ENCODE measurements at regions of chr7 and their contacts with region 1.

Region 1: GRCh38 chr7:26078437-26079336 is 73.3 kb upstream of the NFE2L3 start:
- DNase-seq: peak; percentile 69
- ATAC-seq: peak; percentile 92
- H3K4me3 ChIP-seq: peak overlapping the region; percentile 42; the same call in 1 of the 2 replicates
- H3K27ac ChIP-seq: no peak overlapping the region
- H3K4me1 ChIP-seq: peaks cover 30% of the 10 kb centered on the region
- H3K27me3 ChIP-seq: no peaks in the 10 kb centered on the region
- CTCF ChIP-seq: peak; percentile 71

Region 2: DNA sequence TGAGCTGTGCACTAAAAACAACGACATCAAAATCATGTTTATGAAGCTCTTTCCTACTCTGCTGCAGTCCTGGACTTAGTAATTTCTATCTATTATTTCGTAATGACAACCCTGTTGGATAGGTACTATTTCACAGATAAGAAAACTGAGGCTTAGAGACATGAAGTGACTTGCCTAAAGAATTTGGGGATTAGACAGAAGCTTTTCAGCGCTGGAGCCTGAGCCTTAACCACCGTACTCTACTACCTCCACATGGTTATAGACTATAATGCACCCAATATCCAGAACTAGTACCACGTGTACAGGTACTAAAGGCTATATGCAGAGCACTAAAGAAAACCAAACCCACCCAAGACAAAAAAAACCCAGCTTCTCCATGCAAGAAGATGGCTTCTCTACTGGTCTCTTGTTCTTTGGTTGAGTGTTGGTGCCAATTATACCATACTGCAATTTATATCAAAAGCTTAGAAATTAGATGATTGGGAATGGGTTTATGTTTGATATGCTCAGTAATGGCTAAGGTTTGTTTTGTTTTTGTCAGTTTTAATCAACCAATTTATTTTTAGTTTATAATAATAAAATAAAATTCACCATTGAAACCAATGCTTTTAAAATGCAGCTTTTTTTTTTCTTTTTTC is 206.4 kb after region 1 on chr7:
- CTCF ChIA-PET with region 1: no interaction called
- POLR2A ChIA-PET with region 1: no interaction called
- intact Hi-C with region 1: loop called (anchors 5 kb)
- DNase-seq: peak; percentile 65
- ATAC-seq: peak; percentile 84
- H3K4me3 ChIP-seq: no peak overlapping the region
- H3K27ac ChIP-seq: no peak overlapping the region
- H3K4me1 ChIP-seq: no peaks in the 10 kb centered on the region
- H3K27me3 ChIP-seq: no peaks in the 10 kb centered on the region
- CTCF ChIP-seq: peak; percentile 51

Region 3: GRCh38 chr7:26675143-26675887 is 596.6 kb after region 1 on chr7:
- CTCF ChIA-PET with region 1: no interaction called
- POLR2A ChIA-PET with region 1: no interaction called
- intact Hi-C with region 1: loop called (anchors 10 kb)
- DNase-seq: peak; percentile 90
- ATAC-seq: peak; percentile 98
- H3K4me3 ChIP-seq: no peak overlapping the region
- H3K27ac ChIP-seq: peak overlapping the region; percentile 39
- H3K4me1 ChIP-seq: peaks cover 29% of the 10 kb centered on the region
- H3K27me3 ChIP-seq: no peaks in the 10 kb centered on the region
- CTCF ChIP-seq: no peak

Measured in PC-3 (cell line).